ENCODE measurements at regions of chr9 and their contacts with region 1.

Region 1: GRCh38 chr9:72564479-72565281 is 43.3 kb downstream of the TMC1 start:
- DNase-seq: no peak
- ATAC-seq: no peak
- H3K4me3 ChIP-seq: no peak overlapping the region
- H3K27ac ChIP-seq: no peak overlapping the region
- H3K4me1 ChIP-seq: no peaks in the 10 kb centered on the region
- H3K27me3 ChIP-seq: no peaks in the 10 kb centered on the region
- CTCF ChIP-seq: no peak

Region 2: DNA sequence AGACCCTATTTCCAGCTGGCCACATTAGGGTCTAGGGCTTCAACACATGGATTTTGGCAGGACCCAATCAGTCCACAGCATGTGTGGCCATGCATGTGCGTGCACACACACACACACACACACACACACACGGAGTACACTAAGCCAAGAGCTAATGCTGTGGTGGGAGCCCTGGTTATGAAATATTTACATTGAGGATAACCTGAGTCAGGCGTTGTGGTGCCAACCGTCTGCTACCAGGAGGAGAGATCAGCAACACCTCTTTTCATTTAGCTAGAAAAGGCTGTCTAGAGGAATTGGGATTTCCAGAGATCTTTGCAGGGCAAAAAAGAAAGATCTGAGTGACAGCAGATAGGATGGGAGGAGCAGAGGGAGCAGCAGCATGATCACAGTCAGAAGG is 1584.7 kb before region 1 on chr9:
- intact Hi-C with region 1: no loop called
- DNase-seq: no peak
- ATAC-seq: no peak
- H3K4me3 ChIP-seq: no peak overlapping the region
- H3K27ac ChIP-seq: no peak overlapping the region
- H3K4me1 ChIP-seq: no peaks in the 10 kb centered on the region
- H3K27me3 ChIP-seq: no peaks in the 10 kb centered on the region
- CTCF ChIP-seq: no peak

Region 3: DNA sequence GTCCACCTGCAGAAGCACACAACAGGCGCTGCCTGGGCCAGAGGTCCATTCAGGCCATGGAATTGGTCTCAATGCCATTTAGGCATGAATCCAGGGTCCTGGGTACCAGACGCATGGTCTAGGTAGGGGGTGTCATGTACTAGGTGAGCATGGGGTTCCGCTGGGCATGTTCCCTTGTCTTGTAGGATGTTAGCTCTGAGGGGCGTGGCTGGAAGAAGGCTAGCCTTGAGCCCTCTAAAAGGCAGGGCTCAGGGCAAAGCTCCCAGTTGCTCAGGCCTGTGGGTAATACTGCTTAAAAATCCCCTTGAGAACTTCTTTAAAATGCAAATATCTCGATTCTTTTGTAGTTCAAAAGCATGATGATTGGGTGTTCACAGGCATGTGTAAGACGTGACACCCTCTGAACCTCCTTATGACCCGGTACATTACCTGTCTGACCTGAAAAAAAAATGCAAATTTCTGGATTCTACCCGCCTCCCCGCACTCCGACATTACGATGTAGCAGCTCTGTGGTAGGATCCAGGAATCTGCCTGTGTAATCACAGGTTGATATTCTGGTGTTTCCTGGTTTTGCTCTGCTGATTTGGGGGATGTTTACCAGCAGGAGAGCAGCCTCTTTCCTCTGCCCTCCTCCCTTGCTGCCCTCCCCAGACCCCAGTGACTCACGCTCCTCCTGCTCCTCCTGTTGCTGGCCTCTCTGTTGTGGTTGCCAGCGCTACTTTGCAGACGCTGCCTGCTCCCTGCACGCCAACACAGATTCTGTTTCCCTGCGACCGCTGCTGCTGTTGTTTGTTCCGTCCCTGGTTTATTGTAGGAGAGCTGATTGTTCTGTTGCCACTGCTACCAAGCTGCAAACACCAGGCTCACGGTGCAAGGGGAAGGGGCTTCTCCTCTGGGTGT is 37.5 kb before region 1 on chr9:
- intact Hi-C with region 1: loop called in 1 of 10 experiments (anchors 5 kb)
- DNase-seq: peak; percentile 61 to 63
- ATAC-seq: peak; percentile 83 to 97 (median 92)
- H3K4me3 ChIP-seq: peak overlapping the region in 9 of 10 donors; percentile 11 to 40 (median 27)
- H3K27ac ChIP-seq: peak overlapping the region in 7 of 10 donors; percentile 6 to 80 (median 67)
- H3K4me1 ChIP-seq: peaks cover 0 to 36% (median 18%) of the 10 kb centered on the region in 9 donors
- H3K27me3 ChIP-seq: no peaks in the 10 kb centered on the region
- CTCF ChIP-seq: peak in 1 of 9 donors; percentile 9

Region 4: DNA sequence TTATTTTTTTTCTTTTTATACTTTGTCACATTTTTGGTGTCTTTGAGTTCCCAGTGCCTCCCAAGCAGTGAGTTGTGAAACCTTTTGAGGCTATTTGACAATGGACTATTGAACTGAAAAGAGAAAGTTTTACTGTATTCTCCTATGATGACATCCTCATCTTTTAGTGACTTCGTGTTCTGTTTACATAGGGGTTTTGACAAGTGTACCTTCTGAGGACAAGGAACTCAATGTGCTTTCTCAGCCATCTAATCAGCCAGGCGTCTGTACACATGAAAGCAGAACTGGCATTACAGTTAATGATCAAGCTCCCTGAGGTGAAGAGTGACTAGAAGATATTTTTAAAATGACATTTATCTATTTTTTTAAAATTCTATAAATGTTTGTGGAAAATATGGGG is 762.5 kb after region 1 on chr9:
- intact Hi-C with region 1: loop called in 1 of 10 experiments (anchors 5 kb)
- DNase-seq: no peak
- ATAC-seq: no peak
- H3K4me3 ChIP-seq: no peak overlapping the region
- H3K27ac ChIP-seq: no peak overlapping the region
- H3K4me1 ChIP-seq: no peaks in the 10 kb centered on the region
- H3K27me3 ChIP-seq: no peaks in the 10 kb centered on the region
- CTCF ChIP-seq: no peak